Activated naive CD4-positive, alpha-beta T cell treated with anti-CD3 and anti-CD28 coated beads for 36 hours (primary cell): ENCODE measurements at regions of chr22 and their contacts with region 1.

Region 1: DNA sequence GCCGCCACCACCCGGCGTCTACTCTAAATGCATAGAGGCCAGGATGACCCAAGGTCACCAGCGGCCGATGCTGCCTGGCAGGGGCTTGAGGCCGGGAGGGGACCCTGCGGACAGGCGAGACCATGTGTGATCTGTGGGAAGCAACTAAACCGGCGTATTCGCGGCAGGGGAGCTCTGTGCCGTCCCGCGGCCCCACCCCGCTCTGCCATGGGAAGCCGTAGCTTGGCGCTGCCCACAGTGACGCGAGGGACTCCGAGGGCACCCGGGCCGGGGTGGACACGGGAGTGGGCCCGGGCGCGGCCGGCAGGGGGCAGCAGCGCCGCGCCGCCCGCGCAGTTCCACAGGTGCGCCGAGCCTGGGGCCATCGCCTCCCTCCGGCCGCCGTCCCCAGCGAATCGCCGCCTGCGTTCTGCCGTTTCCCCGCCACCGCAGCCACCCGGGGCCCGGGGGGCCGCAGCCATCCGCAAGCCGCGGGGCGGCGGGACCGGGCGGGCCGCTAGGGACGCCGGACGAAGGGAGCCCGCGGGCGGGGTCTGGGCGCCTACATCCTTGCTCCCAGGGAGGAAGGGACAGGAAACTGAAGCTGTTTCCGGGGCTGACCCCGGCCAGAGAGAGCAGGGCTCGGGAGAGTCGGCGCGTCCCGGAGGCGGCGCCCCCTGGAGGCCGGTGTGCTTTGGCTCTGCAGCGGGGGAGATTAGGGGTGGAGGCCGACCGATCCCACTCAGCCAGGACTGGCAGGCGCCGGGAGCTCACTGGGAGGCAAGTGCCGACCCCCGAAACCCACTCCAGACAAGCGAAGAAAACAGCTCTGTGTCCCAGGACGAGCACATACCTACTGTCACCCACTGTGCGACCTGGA is 12.5 kb upstream of the HDHD5 start:
- DNase-seq: peak; percentile 83
- H3K4me3 Mint-ChIP-seq: peak overlapping the region; percentile 78
- H3K27ac Mint-ChIP-seq: peak overlapping the region; percentile 44
- H3K4me1 Mint-ChIP-seq: peaks cover 5% of the 10 kb centered on the region
- H3K27me3 Mint-ChIP-seq: no peaks in the 10 kb centered on the region

Region 2: DNA sequence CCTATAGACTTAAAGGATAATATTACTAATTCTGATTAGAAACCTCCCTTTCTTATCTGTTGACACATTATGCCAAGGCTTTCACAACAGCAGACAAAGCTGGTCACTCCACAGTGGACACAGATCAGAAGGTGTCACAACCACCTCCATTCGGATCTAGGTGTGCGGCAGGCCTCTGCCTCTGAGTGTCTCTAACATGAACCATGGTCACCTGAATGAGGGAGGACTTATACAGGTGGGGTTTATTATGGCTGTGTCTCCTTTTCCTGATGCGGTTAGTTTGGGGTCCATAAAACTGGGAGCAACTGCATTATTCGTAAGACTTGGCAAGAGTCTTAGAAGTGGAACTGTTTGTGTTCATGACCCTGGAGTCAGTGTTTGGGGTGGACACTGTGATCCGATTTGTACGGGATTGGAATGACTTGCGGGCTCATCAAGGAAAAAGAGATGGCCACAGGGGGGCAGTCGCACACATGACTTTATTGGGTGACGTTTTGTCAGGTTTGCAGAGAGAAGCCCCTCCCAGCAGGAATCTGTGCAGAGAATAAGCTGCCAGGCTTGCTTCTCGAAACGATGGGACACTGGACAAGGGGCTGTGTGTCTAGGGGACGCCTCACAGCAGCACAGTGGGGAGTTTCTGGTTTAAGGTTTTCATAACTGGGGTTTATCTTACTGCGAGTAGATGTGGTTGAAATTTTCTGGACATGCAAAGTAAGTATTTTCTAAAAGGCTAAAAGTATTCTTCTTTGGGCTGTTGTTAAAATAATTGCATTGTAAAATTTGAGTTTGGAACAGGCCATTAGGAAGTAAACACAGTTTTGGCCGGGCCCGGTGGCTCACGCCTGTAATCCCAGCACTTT is 254.2 kb before region 1 on chr22:
- CTCF ChIA-PET with region 1: no interaction called
- intact Hi-C with region 1: loop called (anchors 1 kb)
- DNase-seq: peak; percentile 81
- H3K4me3 Mint-ChIP-seq: no peak overlapping the region
- H3K27ac Mint-ChIP-seq: no peak overlapping the region
- H3K4me1 Mint-ChIP-seq: no peaks in the 10 kb centered on the region
- H3K27me3 Mint-ChIP-seq: peaks cover 18% of the 10 kb centered on the region

Region 3: GRCh38 chr22:17007257-17007656 is 164.3 kb before region 1 on chr22:
- CTCF ChIA-PET with region 1: no interaction called
- intact Hi-C with region 1: no loop called
- DNase-seq: no peak
- H3K4me3 Mint-ChIP-seq: no peak overlapping the region
- H3K27ac Mint-ChIP-seq: no peak overlapping the region
- H3K4me1 Mint-ChIP-seq: no peaks in the 10 kb centered on the region
- H3K27me3 Mint-ChIP-seq: peaks cover 46% of the 10 kb centered on the region

Region 4: DNA sequence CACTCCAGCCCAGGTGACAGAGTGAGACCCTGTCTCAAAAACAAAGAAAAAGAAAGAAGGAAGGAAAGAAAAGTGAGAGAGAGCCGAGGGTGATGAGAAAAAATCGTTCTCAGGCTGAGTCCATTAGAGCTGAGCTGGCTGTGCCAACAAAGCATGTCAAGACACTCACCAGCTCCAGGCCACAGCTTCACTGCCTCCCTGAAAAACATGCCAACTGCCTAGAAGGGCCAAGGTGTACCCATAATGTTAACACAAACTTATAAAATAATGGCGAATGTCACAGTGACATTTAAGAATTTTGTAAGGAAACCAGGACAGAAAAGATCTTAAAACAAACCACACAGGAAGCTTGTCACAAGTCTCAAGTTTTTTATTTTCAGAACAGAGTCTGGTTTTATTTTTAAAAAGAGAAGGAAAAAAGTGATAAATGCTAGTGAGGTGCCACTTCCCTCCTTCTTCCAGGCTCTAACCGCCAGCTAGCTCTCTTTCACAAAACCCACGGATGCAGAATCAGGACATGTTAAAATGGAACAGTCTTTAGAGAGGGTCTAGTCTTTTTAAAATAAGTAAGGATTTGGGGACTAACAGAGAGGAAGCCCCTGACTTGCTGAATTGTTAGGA is 55.5 kb before region 1 on chr22:
- CTCF ChIA-PET with region 1: interaction called, 10 read pairs
- intact Hi-C with region 1: no loop called
- DNase-seq: no peak
- H3K4me3 Mint-ChIP-seq: peak overlapping the region; percentile 42
- H3K27ac Mint-ChIP-seq: peak overlapping the region; percentile 73
- H3K4me1 Mint-ChIP-seq: peaks cover 65% of the 10 kb centered on the region
- H3K27me3 Mint-ChIP-seq: peaks cover 4% of the 10 kb centered on the region

Region 5: GRCh38 chr22:17205432-17205831 is 33.9 kb after region 1 on chr22:
- CTCF ChIA-PET with region 1: interaction called, 12 read pairs
- intact Hi-C with region 1: no loop called
- DNase-seq: peak; percentile 14
- H3K4me3 Mint-ChIP-seq: no peak overlapping the region
- H3K27ac Mint-ChIP-seq: no peak overlapping the region
- H3K4me1 Mint-ChIP-seq: peaks cover 9% of the 10 kb centered on the region
- H3K27me3 Mint-ChIP-seq: no peaks in the 10 kb centered on the region

Region 6: GRCh38 chr22:17258015-17258787 is 86.7 kb after region 1 on chr22:
- CTCF ChIA-PET with region 1: interaction called, 13 read pairs
- intact Hi-C with region 1: no loop called
- DNase-seq: peak; percentile 76
- H3K4me3 Mint-ChIP-seq: no peak overlapping the region
- H3K27ac Mint-ChIP-seq: peak overlapping the region; percentile 50
- H3K4me1 Mint-ChIP-seq: peaks cover 25% of the 10 kb centered on the region
- H3K27me3 Mint-ChIP-seq: no peaks in the 10 kb centered on the region

Region 7: GRCh38 chr22:17281440-17281841 is 109.9 kb after region 1 on chr22:
- CTCF ChIA-PET with region 1: interaction called, 13 read pairs
- intact Hi-C with region 1: no loop called
- DNase-seq: peak; percentile 71
- H3K4me3 Mint-ChIP-seq: peak overlapping the region; percentile 38
- H3K27ac Mint-ChIP-seq: peak overlapping the region; percentile 79
- H3K4me1 Mint-ChIP-seq: peaks cover 15% of the 10 kb centered on the region
- H3K27me3 Mint-ChIP-seq: no peaks in the 10 kb centered on the region

Region 8: DNA sequence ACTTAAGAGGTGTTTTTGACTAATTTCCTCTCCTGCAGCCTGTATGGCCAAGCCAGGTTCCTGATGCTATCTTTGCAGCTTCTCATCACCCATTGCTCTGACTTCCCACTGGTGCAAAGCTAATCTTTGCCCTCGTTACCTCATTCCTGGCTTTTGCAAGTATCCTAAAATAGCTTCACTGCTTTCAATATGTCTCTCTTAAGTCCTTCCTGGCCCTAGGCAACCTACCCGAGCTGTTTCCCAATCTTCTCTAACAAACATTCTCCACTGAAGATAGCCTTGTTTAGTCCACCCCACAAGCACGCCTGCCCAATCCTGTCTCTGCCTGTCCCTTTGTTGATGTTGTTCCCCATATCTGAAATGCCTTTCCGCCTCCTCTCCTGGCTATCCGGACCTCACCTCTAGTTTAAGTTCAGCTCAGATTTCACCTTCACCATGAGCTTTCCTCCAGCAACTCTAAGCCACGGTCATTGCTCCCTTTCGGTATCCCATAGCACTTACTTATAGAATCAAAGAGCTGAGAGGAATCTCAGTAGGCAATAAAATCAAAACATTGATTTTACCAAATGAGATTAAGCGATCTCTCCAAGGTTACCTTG is 167.7 kb after region 1 on chr22:
- CTCF ChIA-PET with region 1: no interaction called
- intact Hi-C with region 1: no loop called
- DNase-seq: no peak
- H3K4me3 Mint-ChIP-seq: no peak overlapping the region
- H3K27ac Mint-ChIP-seq: no peak overlapping the region
- H3K4me1 Mint-ChIP-seq: no peaks in the 10 kb centered on the region
- H3K27me3 Mint-ChIP-seq: no peaks in the 10 kb centered on the region